ENCODE measurements at regions of chr3 and their contacts with region 1.

Region 1: DNA sequence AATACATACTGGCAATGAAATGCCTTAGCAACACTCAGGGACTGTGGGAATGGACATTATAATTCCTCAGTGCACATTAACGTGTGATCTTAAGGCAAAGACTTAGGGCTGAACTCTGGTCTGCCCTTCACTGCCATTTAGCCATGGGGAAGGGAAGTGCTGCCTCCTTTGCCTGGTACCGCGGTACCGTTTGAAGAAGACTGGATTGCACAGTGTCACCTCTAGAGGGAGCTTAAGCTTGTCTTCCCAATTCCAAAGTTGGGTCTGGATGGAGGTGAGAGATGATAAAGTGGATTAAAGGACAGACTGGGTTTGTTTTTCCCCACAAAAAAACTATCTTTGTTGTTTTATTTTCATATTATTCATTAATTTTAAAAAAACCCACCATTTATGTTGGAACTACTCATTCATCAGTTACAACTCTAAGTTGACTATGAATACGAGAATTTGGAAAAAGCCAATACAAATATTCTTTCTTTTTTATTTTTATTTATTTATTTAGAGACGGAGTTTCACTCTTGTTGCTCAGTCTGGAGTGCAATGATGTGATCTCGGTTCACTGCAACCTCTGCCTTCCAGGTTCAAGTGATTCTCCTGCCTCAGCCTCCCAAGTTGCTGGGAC is 60.0 kb upstream of the SYN2 start:
- DNase-seq: peak in 1 of 2 experiments; percentile 35
- H3K4me3 ChIP-seq: no peak overlapping the region
- H3K4me3 Mint-ChIP-seq: no peak overlapping the region
- H3K27ac Mint-ChIP-seq: no peak overlapping the region
- H3K4me1 ChIP-seq: no peaks in the 10 kb centered on the region
- H3K4me1 Mint-ChIP-seq: no peaks in the 10 kb centered on the region
- H3K27me3 ChIP-seq: no peaks in the 10 kb centered on the region
- H3K27me3 Mint-ChIP-seq: peaks cover 6% of the 10 kb centered on the region
- CTCF ChIP-seq: peak; percentile 55 to 62

Region 2: DNA sequence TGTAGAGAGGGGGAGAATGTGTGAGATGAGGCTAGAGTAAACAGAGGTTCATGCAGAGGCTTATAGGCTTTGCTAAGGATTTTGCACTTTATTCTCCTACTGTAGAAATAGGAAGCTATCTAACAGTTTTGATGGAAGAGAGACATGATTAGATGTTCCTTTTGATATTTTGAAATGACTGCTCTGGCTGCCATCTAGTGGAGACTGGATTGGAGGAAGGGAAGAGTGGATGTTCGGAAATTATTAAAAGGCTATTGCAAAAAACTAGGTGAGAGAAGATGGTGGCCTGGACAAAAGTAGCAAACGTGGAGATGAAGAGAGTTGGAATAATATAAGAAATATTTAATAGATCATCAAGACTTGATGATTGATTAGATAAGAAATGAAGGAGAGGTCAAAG is 102.2 kb after region 1 on chr3:
- CTCF ChIA-PET with region 1: no interaction called
- POLR2A ChIA-PET with region 1: no interaction called
- intact Hi-C with region 1: loop called (anchors 1 kb)
- DNase-seq: peak in 1 of 2 experiments; percentile 5
- H3K4me3 ChIP-seq: no peak overlapping the region
- H3K4me3 Mint-ChIP-seq: no peak overlapping the region
- H3K27ac Mint-ChIP-seq: no peak overlapping the region
- H3K4me1 ChIP-seq: no peaks in the 10 kb centered on the region
- H3K4me1 Mint-ChIP-seq: no peaks in the 10 kb centered on the region
- H3K27me3 ChIP-seq: no peaks in the 10 kb centered on the region
- H3K27me3 Mint-ChIP-seq: no peaks in the 10 kb centered on the region
- CTCF ChIP-seq: peak; percentile 32 to 56